Activated T-helper 1 cell treated with anti-CD3 and anti-CD28 coated beads, Interleukin-12 subunit alpha, Interleukin-12 subunit beta, Interleukin-2, Interleukin-4 antibody, amounts not matched to agents 30 ng/mL and 10 ng/mL and 1 ng/mL, durations not matched to agents 14 hours and 24 hours and 36 hours (primary cell): ENCODE measurements at regions of chr19 and their contacts with region 1.

Region 1: DNA sequence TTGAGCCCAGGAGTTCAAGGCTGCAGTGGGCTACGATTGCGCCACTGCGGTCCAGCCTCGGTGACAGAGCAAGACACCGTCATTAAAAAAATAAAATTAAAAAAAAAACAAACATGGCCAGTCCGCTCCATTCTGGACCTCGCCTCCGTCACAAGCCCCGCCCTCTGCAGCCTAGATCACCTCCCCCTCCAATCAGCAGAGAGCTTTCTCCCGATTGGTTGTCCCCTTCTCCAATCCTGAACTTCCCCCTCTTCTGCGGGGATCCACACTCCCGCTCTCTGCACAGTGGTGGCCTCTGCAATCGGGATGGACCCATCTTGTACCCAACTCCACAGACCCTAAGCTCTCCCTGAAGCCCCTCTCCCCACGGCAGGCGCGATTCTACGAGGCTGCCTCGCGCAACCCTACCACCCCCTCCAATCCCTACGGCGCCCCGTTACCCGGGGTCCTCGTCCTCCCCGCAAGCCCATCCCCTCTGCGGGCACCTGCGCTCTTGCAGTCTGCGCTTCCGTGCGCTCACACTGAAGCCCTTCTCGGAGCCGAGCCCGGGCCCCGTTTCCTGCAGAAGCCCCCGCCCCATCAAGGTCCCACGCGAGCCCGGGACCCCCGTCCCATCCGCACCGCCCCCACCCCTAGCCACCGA is 540 bp downstream of the TMEM160 start:
- DNase-seq: peak; percentile 74
- H3K4me3 Mint-ChIP-seq: peak overlapping the region; percentile 99
- H3K27ac Mint-ChIP-seq: peak overlapping the region; percentile 98
- H3K4me1 Mint-ChIP-seq: peaks cover 12% of the 10 kb centered on the region
- H3K27me3 Mint-ChIP-seq: no peaks in the 10 kb centered on the region

Region 2: GRCh38 chr19:46850228-46851203 is 197.4 kb before region 1 on chr19 and contains the start of gene AP2S1:
- intact Hi-C with region 1: loop called (anchors 1 kb)
- DNase-seq: peak; percentile 92
- H3K4me3 Mint-ChIP-seq: peak within 1 kb of the TSS; percentile 92
- H3K27ac Mint-ChIP-seq: peak within 1 kb of the TSS; percentile 86
- H3K4me1 Mint-ChIP-seq: peaks cover 24% of the 10 kb centered on the region
- H3K27me3 Mint-ChIP-seq: peaks cover 6% of the 10 kb centered on the region
- total RNA-seq, gene AP2S1: 96.4 and 98.1 TPM in 2 replicates

Region 3: GRCh38 chr19:47035127-47036096 is 12.5 kb before region 1 on chr19:
- intact Hi-C with region 1: loop called (anchors 1 kb)
- DNase-seq: peak; percentile 93
- H3K4me3 Mint-ChIP-seq: peak overlapping the region; percentile 86
- H3K27ac Mint-ChIP-seq: peak overlapping the region; percentile 92
- H3K4me1 Mint-ChIP-seq: peaks cover 24% of the 10 kb centered on the region
- H3K27me3 Mint-ChIP-seq: peaks cover 14% of the 10 kb centered on the region

Region 4: GRCh38 chr19:47112997-47113849 is 65.3 kb after region 1 on chr19 and contains the start of gene ZC3H4:
- intact Hi-C with region 1: loop called (anchors 1 kb)
- DNase-seq: peak; percentile 100
- H3K4me3 Mint-ChIP-seq: peak within 1 kb of the TSS; percentile 92
- H3K27ac Mint-ChIP-seq: peak within 1 kb of the TSS; percentile 99
- H3K4me1 Mint-ChIP-seq: peaks cover 33% of the 10 kb centered on the region
- H3K27me3 Mint-ChIP-seq: no peaks in the 10 kb centered on the region
- total RNA-seq, gene ZC3H4: 111 and 114 TPM in 2 replicates

Region 5: DNA sequence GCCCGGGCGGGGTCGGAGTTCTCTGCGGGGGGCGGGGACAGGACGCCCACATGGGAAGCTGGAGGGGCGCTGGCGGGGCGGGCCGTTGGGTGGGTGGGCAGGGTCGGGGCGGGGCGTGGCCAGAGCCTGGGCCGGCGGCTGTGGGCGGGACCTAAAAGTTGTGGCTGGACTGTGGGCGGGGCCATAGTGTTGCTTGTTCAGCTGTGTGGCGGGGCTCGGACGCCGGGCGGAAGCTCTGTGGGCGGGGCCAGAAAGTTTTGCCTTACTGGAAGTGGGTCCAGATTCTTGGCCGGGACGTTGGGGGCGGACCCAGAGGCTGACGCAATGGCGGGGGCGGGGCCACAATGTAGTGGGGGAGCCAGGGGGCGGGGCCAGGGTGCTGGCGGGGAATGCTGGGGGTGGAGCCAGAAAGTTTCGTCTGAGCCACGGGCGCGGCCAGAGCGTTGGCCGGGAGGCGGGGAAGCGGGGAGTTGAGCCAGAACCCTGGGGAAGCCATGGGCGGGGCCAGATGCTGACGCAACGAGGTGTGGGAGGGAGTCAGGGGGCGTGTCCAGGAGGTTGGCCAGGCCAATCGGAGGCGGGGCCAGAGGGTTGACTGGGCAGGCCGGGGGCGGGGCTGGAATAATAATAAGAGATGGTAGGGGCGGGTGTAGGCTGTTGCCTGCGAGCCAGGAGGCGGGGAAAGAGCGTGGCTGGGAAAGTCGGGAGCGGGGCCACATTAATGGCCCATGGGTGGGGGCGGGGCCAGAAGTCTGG is 209.0 kb after region 1 on chr19:
- intact Hi-C with region 1: loop called (anchors 1 kb)
- DNase-seq: peak; percentile 99
- H3K4me3 Mint-ChIP-seq: peak overlapping the region; percentile 86
- H3K27ac Mint-ChIP-seq: peak overlapping the region; percentile 95
- H3K4me1 Mint-ChIP-seq: peaks cover 31% of the 10 kb centered on the region
- H3K27me3 Mint-ChIP-seq: peaks cover 2% of the 10 kb centered on the region

Region 6: GRCh38 chr19:48720613-48721296 is 1672.9 kb after region 1 on chr19:
- intact Hi-C with region 1: loop called (anchors 10 kb)
- DNase-seq: peak; percentile 91
- H3K4me3 Mint-ChIP-seq: peak overlapping the region; percentile 92
- H3K27ac Mint-ChIP-seq: peak overlapping the region; percentile 98
- H3K4me1 Mint-ChIP-seq: peaks cover 23% of the 10 kb centered on the region
- H3K27me3 Mint-ChIP-seq: no peaks in the 10 kb centered on the region